Cardiac septum (tissue), 1 donor: ENCODE measurements at regions of chr12 and their contacts with region 1.

Region 1: GRCh38 chr12:122860346-122861090 is 25.3 kb downstream of the HIP1R start:
- DNase-seq: peak; percentile 95

Region 2: DNA sequence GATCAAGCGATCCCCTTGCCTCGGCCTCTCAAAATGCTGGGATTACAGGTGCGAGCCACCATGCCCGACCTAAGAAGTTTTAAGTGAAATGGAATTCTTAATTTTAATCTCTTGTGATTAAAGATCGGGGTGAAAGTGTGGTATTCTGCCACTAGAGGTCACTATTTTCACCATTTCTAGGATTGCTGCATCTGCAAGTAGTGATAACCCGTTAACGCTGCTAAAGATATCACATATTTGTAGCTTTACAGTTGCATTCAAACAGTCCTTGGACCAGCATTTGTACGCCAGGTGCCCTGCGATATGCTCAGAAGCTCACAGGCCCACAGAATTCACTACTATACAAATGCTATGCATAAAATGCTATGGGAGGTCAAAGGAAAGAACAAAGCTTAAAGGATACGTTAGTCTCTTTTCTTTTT is 66.8 kb before region 1 on chr12:
- intact Hi-C with region 1: loop called (anchors 5 kb)
- DNase-seq: no peak

Region 3: DNA sequence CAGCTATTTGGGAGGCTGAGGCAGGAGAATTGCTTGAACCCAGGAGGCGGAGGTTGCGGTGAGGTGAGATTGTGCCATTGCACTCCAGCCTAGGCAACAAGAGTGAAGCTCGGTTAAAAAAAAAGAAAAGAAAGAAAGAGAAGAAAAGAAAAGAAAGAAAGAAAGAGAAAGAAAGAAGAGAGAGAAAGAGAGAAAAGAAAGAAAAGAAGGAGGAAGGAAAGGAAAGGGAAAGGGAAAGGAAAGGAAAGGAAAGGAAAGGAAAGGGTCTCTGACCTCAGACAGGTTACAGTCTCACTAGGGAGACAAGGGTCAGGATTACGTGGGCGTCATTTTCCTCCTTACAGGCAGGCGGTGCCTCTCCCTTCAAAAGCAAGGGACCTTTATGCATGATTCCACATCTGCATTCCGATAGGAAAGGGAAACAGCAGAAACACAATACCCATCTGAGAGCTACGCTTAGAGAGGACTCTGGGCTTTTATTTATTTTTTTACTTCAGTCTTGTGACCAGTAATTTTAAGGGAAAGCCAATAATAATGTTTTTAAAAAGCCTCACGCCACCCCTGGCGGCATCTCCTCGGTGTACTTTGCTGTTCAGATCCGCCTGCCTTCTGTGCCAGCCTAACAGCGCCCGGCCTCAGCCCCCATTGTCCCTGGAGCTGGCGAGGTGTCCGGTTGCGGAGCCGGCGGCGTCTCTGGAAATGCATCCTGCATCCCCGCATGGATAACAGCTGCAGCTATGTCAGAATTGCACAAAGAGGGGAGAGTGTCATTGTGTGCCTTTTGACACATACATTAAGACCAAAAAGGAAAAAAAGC is 26.2 kb before region 1 on chr12:
- intact Hi-C with region 1: no loop called
- DNase-seq: peak; percentile 74

Region 4: DNA sequence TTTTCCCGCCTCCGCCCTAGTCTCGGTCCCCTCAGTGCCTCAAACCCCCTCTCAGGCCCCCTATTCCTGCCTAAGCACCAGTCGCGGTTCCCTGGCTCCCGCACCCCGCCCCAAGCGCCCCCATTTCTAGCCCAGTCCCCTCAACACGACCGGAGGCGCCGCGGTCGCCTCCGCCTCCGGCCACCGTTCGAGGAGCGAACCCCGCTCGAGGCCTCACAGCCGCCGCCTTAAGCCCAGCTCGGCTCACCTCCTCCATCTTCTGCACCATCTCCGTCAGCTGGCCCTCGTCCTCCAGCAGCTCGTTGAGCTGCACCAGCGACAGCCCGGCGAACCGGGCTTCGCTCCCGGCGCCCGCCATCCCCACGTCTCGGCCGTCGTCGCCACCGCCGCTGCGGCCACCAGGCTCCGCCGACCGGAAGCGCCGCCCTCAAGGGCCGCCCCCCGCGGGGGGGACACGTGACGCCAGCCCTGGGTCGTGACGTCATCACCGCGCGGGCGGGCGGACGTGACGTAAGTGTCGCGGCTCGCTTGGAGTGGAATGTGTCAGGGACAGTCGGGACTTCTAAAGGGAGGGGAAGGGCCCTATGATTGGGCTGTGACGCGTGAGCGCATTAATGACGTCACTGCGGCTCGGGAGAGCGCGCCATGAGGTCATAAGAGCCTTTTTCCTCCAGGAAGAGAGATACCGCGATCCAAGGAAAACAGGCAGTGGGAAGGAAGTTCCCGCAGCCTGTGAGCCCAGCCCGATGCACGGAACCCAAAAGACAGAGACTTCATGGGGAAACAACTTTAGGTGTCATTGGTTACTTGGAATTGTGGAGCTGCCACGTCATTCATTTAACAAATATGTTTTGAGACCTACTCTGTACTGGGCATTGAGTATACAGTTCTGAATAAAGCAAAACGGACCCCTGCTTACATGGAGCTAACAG is 35.5 kb after region 1 on chr12 and contains the start of gene VPS37B:
- intact Hi-C with region 1: loop called (anchors 5 kb)
- DNase-seq: peak; percentile 92
- total RNA-seq, gene VPS37B: 16.8 TPM

Region 5: DNA sequence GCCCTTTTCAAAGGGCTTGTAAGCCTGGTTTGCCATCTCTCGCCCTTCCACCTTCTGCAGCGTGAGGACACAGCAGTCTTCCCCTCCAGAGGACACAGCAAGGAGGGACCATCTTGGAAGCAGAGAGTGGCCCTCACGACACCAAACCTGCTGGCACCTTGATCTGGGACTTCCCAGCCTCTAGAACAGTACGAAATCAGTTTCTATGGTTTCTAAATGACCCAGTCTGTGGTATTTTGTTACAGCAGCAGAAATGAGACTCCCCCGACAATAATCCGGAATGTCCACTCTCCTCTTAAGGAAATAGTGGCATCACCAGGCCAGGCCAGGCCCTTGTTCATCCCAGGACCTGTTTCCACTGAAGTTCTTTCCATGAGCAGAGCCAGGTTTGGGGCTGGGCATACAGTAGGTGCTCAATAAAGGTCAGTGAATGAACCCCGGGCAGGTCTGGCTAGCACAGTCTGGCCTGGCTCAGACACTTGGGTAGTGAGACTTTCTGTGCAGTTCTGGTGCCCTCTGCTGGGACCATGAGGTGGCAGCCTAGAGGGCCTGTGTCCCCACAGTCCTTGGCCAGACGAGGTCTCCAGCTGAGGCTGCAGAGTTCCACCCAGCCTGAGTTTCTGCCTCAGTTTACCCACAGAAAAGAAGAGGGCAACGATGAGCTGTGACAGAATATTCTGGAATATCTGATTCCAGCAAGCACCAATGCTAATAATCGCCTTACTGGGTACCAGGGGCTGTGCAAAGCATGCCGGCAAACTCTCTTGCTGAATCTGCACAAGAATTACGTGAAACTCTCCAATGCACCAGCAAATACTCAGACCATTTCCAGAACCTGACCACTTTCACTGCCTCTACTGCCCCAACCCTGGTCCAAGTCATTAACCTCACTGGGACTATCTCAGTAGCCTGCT is 91.7 kb after region 1 on chr12:
- intact Hi-C with region 1: loop called (anchors 1 kb)
- DNase-seq: peak; percentile 92

Region 6: GRCh38 chr12:123160801-123161487 is 300.4 kb after region 1 on chr12:
- intact Hi-C with region 1: no loop called
- DNase-seq: no peak